ENCODE measurements at regions of chr5 and their contacts with region 1.

Region 1: GRCh38 chr5:73565139-73565968 is at the starts of genes ANKRA2 and UTP15:
- DNase-seq: peak; percentile 95 to 99 (median 98)
- ATAC-seq: peak; percentile 99
- H3K4me3 ChIP-seq: peak within 1 kb of the TSS; percentile 71
- H3K4me3 Mint-ChIP-seq: peak within 1 kb of the TSS; percentile 91 to 100 (median 98)
- H3K27ac ChIP-seq: peak within 1 kb of the TSS; percentile 95
- H3K27ac Mint-ChIP-seq: peak within 1 kb of the TSS; percentile 96 to 100 (median 99)
- H3K4me1 ChIP-seq: peaks cover 11 to 26% of the 10 kb centered on the region in 2 donors
- H3K4me1 Mint-ChIP-seq: peaks cover 22 to 72% (median 53%) of the 10 kb centered on the region in 7 donors
- H3K27me3 ChIP-seq: no peaks in the 10 kb centered on the region
- H3K27me3 Mint-ChIP-seq: peaks cover 0 to 3% (median 0%) of the 10 kb centered on the region in 5 donors
- total RNA-seq, gene ANKRA2: 22.7 to 57.8 (median 41.5) TPM
- total RNA-seq, gene UTP15: 23.6 to 46.5 (median 25.2) TPM

Region 2: DNA sequence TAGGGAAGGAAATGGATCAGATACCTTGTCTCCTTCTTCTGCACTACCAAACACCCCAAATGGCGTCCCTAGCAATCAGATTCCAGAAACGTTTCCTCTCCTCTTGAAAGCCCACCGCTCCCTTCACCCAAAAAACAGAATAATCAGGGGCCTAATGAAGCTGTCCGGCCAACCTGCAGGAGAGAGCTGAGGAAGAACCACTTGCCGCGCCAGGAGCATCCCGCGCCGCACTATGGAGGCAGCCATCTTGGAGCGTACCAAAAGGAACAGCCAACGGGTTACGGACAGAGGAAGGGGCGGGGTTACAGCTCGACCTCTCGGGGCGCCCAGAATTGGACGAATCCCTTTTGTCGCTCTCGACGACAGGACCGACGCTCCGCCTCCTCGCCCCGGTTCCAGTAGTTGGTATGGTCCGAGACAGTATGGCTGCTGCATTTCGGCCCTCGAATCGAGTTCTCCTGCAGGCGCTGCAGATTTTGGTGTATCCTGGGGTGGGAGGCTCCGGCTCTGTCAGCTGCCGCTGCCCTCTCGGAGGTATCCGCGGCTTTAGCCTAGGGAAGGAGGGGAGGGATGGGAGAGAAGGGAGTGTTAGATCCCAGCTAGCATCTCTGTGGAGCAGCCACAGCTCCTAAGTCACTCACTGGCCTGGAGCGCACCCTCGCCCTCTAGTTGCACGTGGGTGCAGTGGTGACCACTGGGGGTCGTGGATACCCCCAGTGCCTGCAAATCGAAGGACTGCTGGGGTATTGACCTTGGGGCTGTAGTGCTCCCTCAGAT is 1245.2 kb before region 1 on chr5 and contains the starts of genes MRPS27 and PTCD2:
- CTCF ChIA-PET with region 1: no interaction called
- POLR2A ChIA-PET with region 1: no interaction called
- intact Hi-C with region 1: loop called (anchors 2 to 10 kb)
- DNase-seq: peak; percentile 71 to 96 (median 94)
- ATAC-seq: peak; percentile 100
- H3K4me3 ChIP-seq: peak within 1 kb of the TSS; percentile 93
- H3K4me3 Mint-ChIP-seq: peak within 1 kb of the TSS; percentile 93 to 100 (median 98)
- H3K27ac ChIP-seq: peak within 1 kb of the TSS; percentile 89
- H3K27ac Mint-ChIP-seq: peak within 1 kb of the TSS; percentile 88 to 99 (median 95)
- H3K4me1 ChIP-seq: peaks cover 7 to 14% of the 10 kb centered on the region in 2 donors
- H3K4me1 Mint-ChIP-seq: peaks cover 24 to 65% (median 47%) of the 10 kb centered on the region in 7 donors
- H3K27me3 ChIP-seq: no peaks in the 10 kb centered on the region
- H3K27me3 Mint-ChIP-seq: no peaks in the 10 kb centered on the region
- total RNA-seq, gene MRPS27: 36.6 to 54.0 (median 39.5) TPM
- total RNA-seq, gene PTCD2: 5.0 to 12.6 (median 11.2) TPM

Region 3: GRCh38 chr5:72955768-72956323 is 609.5 kb before region 1 on chr5 and contains the start of gene FCHO2:
- CTCF ChIA-PET with region 1: no interaction called
- POLR2A ChIA-PET with region 1: no interaction called
- intact Hi-C with region 1: loop called (anchors 1 to 2 kb)
- DNase-seq: peak; percentile 82 to 98 (median 91)
- ATAC-seq: peak; percentile 98
- H3K4me3 ChIP-seq: peak within 1 kb of the TSS; percentile 85
- H3K4me3 Mint-ChIP-seq: peak within 1 kb of the TSS; percentile 90 to 95 (median 94)
- H3K27ac ChIP-seq: no peak within 1 kb of the TSS
- H3K27ac Mint-ChIP-seq: peak within 1 kb of the TSS; percentile 22 to 92 (median 80)
- H3K4me1 ChIP-seq: peaks cover 5 to 12% of the 10 kb centered on the region in 2 donors
- H3K4me1 Mint-ChIP-seq: peaks cover 10 to 19% (median 13%) of the 10 kb centered on the region in 7 donors
- H3K27me3 ChIP-seq: peaks cover 3 to 4% of the 10 kb centered on the region in 2 donors
- H3K27me3 Mint-ChIP-seq: peaks cover 43 to 69% (median 55%) of the 10 kb centered on the region in 5 donors
- total RNA-seq, gene FCHO2: 1.7 to 7.1 (median 3.0) TPM

Region 4: DNA sequence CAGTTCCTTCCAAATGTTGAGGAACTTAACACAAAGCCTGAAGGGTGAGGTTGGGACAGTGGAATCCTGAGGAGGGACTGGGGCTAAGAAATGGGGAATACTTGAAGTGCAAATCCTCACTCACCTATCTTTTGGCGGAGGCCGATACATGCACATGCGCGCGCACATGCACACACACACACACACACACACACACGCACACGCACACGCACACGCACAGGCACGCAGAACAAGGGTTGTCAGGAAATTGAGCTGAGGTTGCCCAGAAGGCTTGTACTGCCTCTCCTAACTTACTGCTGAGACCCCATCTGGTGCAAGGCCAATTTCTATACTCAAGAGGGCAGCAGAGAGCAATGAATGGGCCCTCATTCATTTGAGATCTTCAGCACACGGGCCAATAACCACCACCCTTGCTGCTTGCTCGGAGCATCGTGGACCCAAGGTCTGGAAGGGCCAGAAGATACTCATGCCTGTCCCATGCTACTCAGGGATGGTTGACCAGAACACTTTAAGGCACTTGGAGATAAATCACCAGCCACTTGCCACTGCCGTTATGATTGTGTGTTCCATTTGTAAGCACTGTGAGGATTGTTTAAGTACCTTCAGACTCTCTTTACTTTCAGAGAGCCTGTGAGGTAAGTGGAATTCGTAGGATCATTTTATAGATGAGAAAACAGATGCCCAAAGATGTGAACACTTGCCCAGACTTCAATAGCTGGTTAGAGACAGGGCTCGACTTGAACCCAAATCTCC is 45.6 kb before region 1 on chr5:
- CTCF ChIA-PET with region 1: no interaction called
- POLR2A ChIA-PET with region 1: no interaction called
- intact Hi-C with region 1: loop called (anchors 1 kb)
- DNase-seq: peak; percentile 29 to 82 (median 80)
- ATAC-seq: peak; percentile 99
- H3K4me3 ChIP-seq: no peak overlapping the region
- H3K4me3 Mint-ChIP-seq: peak overlapping the region in 8 of 10 donors; percentile 55 to 72 (median 66)
- H3K27ac ChIP-seq: no peak overlapping the region
- H3K27ac Mint-ChIP-seq: peak overlapping the region in 8 of 9 donors; percentile 20 to 86 (median 66)
- H3K4me1 ChIP-seq: no peaks in the 10 kb centered on the region
- H3K4me1 Mint-ChIP-seq: peaks cover 8 to 9% (median 9%) of the 10 kb centered on the region in 7 donors
- H3K27me3 ChIP-seq: no peaks in the 10 kb centered on the region
- H3K27me3 Mint-ChIP-seq: peaks cover 0 to 2% (median 0%) of the 10 kb centered on the region in 5 donors

Region 5: DNA sequence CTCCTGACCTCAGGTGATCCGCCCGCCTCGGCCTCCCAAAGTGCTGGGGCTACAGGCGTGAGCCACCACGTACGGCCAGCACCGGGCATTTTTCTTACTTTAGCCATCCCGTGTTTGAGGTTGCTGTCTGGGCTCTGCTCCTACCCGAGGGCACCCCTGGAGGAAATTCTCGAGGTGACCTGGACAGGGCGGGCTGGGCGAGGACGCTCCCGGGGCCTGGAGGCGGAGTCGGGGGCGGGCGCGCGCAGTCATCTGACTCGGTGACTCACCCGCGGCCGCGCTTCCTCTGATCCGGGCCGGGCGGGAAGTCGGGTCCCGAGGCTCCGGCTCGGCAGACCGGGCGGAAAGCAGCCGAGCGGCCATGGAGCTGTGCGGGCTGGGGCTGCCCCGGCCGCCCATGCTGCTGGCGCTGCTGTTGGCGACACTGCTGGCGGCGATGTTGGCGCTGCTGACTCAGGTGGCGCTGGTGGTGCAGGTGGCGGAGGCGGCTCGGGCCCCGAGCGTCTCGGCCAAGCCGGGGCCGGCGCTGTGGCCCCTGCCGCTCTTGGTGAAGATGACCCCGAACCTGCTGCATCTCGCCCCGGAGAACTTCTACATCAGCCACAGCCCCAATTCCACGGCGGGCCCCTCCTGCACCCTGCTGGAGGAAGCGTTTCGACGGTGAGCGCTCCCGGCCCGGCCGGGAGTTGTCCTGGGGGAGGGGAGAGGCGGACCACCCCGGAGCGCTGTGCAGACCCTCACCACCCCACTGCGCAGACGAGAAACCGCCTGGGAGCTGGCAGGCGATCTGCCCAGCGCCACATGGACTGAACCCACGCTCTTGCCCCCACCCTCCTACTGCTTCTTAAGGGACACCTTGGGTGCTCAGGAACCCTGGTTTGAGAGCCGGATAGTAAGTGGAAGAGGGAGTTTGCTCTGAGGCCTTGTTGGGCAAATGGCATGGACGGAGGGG is 1119.8 kb after region 1 on chr5 and contains the start of gene HEXB:
- CTCF ChIA-PET with region 1: no interaction called
- POLR2A ChIA-PET with region 1: no interaction called
- intact Hi-C with region 1: loop called in 1 of 2 experiments (anchors 1 kb)
- DNase-seq: peak; percentile 55 to 89 (median 69)
- ATAC-seq: peak; percentile 91
- H3K4me3 ChIP-seq: peak within 1 kb of the TSS; percentile 86
- H3K4me3 Mint-ChIP-seq: peak within 1 kb of the TSS; percentile 76 to 92 (median 86)
- H3K27ac ChIP-seq: peak within 1 kb of the TSS; percentile 78
- H3K27ac Mint-ChIP-seq: peak within 1 kb of the TSS; percentile 76 to 92 (median 86)
- H3K4me1 ChIP-seq: peaks cover 7 to 13% of the 10 kb centered on the region in 2 donors
- H3K4me1 Mint-ChIP-seq: peaks cover 16 to 34% (median 30%) of the 10 kb centered on the region in 7 donors
- H3K27me3 ChIP-seq: no peaks in the 10 kb centered on the region
- H3K27me3 Mint-ChIP-seq: peaks cover 0 to 17% (median 0%) of the 10 kb centered on the region in 5 donors
- total RNA-seq, gene HEXB: 37.7 to 88.9 (median 64.2) TPM

Region 6: GRCh38 chr5:75336625-75337339 is 1771.4 kb after region 1 on chr5 and contains the start of gene HMGCR:
- CTCF ChIA-PET with region 1: no interaction called
- POLR2A ChIA-PET with region 1: no interaction called
- intact Hi-C with region 1: loop called in 1 of 2 experiments (anchors 2 kb)
- DNase-seq: peak; percentile 82 to 97 (median 95)
- ATAC-seq: peak; percentile 96
- H3K4me3 ChIP-seq: peak within 1 kb of the TSS; percentile 85
- H3K4me3 Mint-ChIP-seq: no peak within 1 kb of the TSS
- H3K27ac ChIP-seq: peak within 1 kb of the TSS; percentile 83
- H3K27ac Mint-ChIP-seq: no peak within 1 kb of the TSS
- H3K4me1 ChIP-seq: peaks cover 8 to 10% of the 10 kb centered on the region in 2 donors
- H3K4me1 Mint-ChIP-seq: peaks cover 18 to 41% (median 37%) of the 10 kb centered on the region in 7 donors
- H3K27me3 ChIP-seq: no peaks in the 10 kb centered on the region
- H3K27me3 Mint-ChIP-seq: no peaks in the 10 kb centered on the region
- total RNA-seq, gene HMGCR: 38.8 to 57.3 (median 43.8) TPM